Caco-2 (cell line): ENCODE measurements at regions of chr16 and their contacts with region 1.

Region 1: DNA sequence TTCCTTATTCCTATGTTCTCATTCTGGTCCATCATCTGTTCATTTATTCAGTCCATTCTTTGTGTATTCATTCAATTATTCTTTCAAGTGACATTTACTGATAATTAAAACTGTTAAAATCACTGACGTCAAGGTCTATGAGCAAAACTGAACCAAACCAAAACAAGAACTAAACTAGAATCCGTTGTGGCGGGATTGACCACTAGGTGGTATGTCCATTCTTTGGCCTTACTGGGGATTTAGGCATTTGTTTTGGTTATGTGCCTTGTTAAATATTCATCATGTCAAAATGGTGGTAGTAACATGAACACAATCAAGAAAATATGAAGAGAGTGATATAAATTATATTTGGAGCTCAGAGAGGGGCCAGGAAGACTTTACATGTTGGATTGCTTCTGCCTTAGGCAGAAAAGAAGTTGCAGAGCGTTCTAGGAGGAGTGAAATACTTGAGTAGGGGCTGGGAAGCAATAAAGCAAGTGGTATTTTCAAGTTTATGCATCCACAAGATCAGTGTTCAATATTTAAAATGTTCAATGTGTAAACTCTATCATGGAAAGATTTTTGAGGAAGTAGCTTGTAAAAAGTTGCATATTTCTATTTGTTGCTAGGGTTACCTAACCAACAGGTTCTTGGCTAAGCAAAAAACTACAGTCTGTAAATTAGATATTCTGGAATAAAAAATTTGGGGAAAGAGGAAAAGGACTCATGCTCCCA is 129.0 kb downstream of the CDH13 start:
- DNase-seq: peak in 1 of 2 experiments; percentile 6
- H3K4me3 ChIP-seq: no peak overlapping the region
- H3K4me3 Mint-ChIP-seq: no peak overlapping the region
- H3K27ac Mint-ChIP-seq: no peak overlapping the region
- H3K4me1 ChIP-seq: no peaks in the 10 kb centered on the region
- H3K4me1 Mint-ChIP-seq: no peaks in the 10 kb centered on the region
- H3K27me3 ChIP-seq: no peaks in the 10 kb centered on the region
- H3K27me3 Mint-ChIP-seq: peaks cover 12% of the 10 kb centered on the region
- CTCF ChIP-seq: peak; percentile 28 to 36

Region 2: DNA sequence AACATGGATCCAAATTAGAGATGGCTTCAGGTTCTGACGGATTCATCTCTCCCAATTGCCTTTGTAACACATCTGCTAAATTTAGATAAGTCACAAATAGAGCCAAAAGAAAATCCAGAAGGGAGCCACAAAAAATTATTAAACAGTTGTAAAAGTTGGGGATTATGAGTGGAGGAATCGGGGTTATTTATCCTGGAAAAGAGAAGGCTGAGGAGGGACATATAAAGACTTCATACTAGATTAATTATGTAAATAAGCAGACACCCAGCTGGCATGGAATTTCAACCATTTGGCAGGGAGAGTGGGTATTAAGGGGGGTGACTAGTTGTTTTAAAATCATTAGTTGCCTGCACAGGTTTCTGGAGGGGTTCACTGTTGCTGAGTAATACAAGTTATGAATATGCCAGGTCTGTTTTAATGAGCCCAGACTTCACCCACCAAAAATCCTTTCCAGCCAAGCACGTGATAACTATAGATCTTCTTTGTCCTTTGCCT is 39.3 kb before region 1 on chr16:
- CTCF ChIA-PET with region 1: no interaction called
- POLR2A ChIA-PET with region 1: no interaction called
- intact Hi-C with region 1: no loop called
- DNase-seq: no peak
- H3K4me3 ChIP-seq: no peak overlapping the region
- H3K4me3 Mint-ChIP-seq: no peak overlapping the region
- H3K27ac Mint-ChIP-seq: no peak overlapping the region
- H3K4me1 ChIP-seq: no peaks in the 10 kb centered on the region
- H3K4me1 Mint-ChIP-seq: no peaks in the 10 kb centered on the region
- H3K27me3 ChIP-seq: no peaks in the 10 kb centered on the region
- H3K27me3 Mint-ChIP-seq: peaks cover 7% of the 10 kb centered on the region
- CTCF ChIP-seq: no peak

Region 3: DNA sequence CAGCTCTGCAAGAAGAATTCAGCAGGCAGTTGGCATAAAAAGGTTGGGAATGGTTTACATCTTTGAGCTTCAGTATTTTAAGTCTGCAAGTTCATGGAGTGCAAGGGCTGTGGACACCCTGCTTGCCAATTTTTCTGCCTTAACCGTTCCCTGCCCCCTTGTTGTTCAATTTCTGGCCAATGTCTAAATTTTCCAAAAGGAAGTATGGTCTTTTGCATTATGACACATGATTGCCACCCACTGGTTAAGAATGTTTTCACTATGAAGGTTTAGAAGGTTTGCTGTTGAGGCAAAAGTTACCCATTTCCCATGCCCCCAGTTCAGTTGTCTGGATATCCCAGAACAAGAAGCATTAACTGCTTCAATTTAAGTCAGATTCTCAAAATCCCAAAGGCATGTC is 313.0 kb after region 1 on chr16:
- CTCF ChIA-PET with region 1: no interaction called
- POLR2A ChIA-PET with region 1: no interaction called
- intact Hi-C with region 1: loop called (anchors 5 kb)
- DNase-seq: no peak
- H3K4me3 ChIP-seq: no peak overlapping the region
- H3K4me3 Mint-ChIP-seq: no peak overlapping the region
- H3K27ac Mint-ChIP-seq: no peak overlapping the region
- H3K4me1 ChIP-seq: no peaks in the 10 kb centered on the region
- H3K4me1 Mint-ChIP-seq: no peaks in the 10 kb centered on the region
- H3K27me3 ChIP-seq: no peaks in the 10 kb centered on the region
- H3K27me3 Mint-ChIP-seq: peaks cover 4% of the 10 kb centered on the region
- CTCF ChIP-seq: no peak